Endothelial cell of umbilical vein (primary cell): ENCODE measurements at regions of chr16 and their contacts with region 1.

Region 1: GRCh38 chr16:2500918-2501750 is 12.6 kb upstream of the ATP6V0C start:
- DNase-seq: peak; percentile 84
- H3K4me3 ChIP-seq: peak overlapping the region in 1 of 3 experiments; percentile 20
- H3K27ac ChIP-seq: no peak overlapping the region
- H3K4me1 ChIP-seq: no peaks in the 10 kb centered on the region
- H3K27me3 ChIP-seq: no peaks in the 10 kb centered on the region
- CTCF ChIP-seq: peak; percentile 96 to 99
- POLR2A ChIP-seq: no peak

Region 2: DNA sequence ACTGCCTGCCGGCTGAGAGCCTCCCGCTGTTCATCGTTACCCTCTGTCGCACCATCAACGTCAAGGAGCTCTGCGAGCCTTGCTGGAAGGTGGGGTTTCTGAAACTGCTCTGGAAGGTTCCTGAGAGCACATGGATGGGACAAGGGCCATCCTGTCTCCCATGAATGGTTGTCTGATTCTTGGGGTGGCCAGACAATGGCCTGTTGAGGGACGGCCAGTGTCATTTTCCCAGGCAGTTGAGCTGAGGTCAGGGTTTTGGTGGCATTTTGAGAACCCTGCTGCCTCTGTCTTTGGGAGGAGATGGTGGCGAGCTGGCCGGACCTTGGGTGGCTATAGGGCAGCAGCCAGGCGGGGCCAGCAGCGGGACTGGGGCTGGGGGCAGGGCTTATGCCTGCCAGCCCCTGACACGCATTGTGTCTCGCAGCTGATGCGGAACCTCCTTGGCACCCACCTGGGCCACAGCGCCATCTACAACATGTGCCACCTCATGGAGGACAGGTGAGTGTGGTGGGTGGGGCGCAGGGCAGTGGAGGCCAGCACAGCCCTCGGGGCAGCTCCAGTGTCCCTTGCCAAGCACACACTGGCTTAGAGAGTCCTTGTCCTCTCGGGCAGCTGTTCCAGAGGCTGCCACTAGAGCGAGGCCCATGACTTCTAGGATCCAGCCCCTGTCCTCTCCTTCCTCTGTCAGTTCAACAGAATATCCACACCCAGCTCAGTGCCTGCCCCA is 444.3 kb before region 1 on chr16:
- CTCF ChIA-PET with region 1: no interaction called
- POLR2A ChIA-PET with region 1: no interaction called
- dilution Hi-C with region 1: no loop called
- intact Hi-C with region 1: no loop called
- DNase-seq: no peak
- H3K4me3 ChIP-seq: no peak overlapping the region
- H3K27ac ChIP-seq: no peak overlapping the region
- H3K4me1 ChIP-seq: no peaks in the 10 kb centered on the region
- H3K27me3 ChIP-seq: no peaks in the 10 kb centered on the region
- CTCF ChIP-seq: no peak
- POLR2A ChIP-seq: no peak

Region 3: GRCh38 chr16:2267913-2268666 is 233.0 kb before region 1 on chr16 and contains the start of gene RNPS1:
- CTCF ChIA-PET with region 1: no interaction called
- POLR2A ChIA-PET with region 1: no interaction called
- dilution Hi-C with region 1: no loop called
- intact Hi-C with region 1: loop called (anchors 2 kb)
- DNase-seq: peak; percentile 96
- H3K4me3 ChIP-seq: peak within 1 kb of the TSS; percentile 16 to 73 (median 44)
- H3K27ac ChIP-seq: peak within 1 kb of the TSS; percentile 78
- H3K4me1 ChIP-seq: peaks cover 9% of the 10 kb centered on the region
- H3K27me3 ChIP-seq: no peaks in the 10 kb centered on the region
- CTCF ChIP-seq: no peak
- POLR2A ChIP-seq: peak; percentile 85
- total RNA-seq, gene RNPS1: 204 and 209 TPM in 2 replicates

Region 4: DNA sequence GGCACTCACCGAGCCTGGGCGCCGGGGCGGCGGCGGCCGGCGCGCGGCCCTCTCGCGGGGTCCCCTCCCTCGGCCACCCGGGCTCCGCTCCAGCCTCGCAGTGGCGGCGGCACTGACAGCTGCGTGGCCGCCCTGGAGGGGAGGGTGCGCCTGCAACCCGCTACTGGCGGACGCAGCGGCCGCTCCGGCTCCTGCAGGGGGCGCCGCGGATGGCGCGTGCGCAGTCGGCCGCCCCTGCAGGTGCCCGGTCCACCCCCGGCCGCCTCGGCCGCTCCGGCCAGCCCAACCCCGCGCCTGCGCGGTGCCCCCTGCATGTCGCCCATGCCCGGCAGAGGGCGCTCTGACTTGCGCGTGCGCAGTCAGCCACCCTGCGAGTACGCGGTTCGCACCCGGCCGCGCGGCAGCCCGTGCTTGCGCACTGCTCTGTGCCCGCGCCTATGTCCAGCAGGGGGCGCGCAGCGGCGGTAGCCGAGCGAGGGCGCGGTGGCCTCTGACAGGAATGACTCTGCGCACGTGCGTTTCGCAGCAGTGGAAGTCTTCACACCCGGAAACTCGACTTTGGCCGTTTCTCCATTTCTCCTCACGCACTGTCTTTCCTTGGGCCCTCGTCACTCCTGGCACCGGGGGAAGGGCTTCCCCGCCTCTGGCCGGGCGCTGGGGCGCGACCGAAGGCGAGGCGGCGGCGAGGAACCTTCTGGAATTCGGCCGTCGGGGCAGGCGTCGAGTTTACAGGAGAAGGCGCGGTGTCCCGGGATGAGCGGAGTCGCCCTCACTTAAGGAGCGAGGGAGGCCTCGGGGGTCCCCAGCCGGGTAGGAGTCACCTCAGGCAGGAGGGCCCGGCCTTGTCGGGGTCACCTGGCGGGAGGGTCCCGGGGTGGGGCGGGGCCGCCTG is 160.3 kb before region 1 on chr16 and contains the start of gene ABCA3:
- CTCF ChIA-PET with region 1: interaction called, 12 read pairs
- POLR2A ChIA-PET with region 1: no interaction called
- dilution Hi-C with region 1: no loop called
- intact Hi-C with region 1: loop called (anchors 1 kb)
- DNase-seq: peak; percentile 98
- H3K4me3 ChIP-seq: peak within 1 kb of the TSS; percentile 57 to 79 (median 60)
- H3K27ac ChIP-seq: peak within 1 kb of the TSS; percentile 29
- H3K4me1 ChIP-seq: peaks cover 9% of the 10 kb centered on the region
- H3K27me3 ChIP-seq: peaks cover 7 to 28% of the 10 kb centered on the region in 2 experiments
- CTCF ChIP-seq: peak; percentile 98 to 100
- POLR2A ChIP-seq: peak; percentile 70
- total RNA-seq, gene ABCA3: 25.5 and 36.0 TPM in 2 replicates

Region 5: GRCh38 chr16:2474877-2475412 is 26.2 kb before region 1 on chr16 and contains the start of gene TBC1D24:
- CTCF ChIA-PET with region 1: interaction called, 10 read pairs
- POLR2A ChIA-PET with region 1: no interaction called
- dilution Hi-C with region 1: no loop called
- intact Hi-C with region 1: loop called (anchors 2 kb)
- DNase-seq: peak; percentile 82
- H3K4me3 ChIP-seq: peak within 1 kb of the TSS; percentile 33 to 72 (median 69)
- H3K27ac ChIP-seq: peak within 1 kb of the TSS; percentile 8
- H3K4me1 ChIP-seq: peaks cover 10% of the 10 kb centered on the region
- H3K27me3 ChIP-seq: peaks cover 11 to 19% of the 10 kb centered on the region in 2 experiments
- CTCF ChIP-seq: no peak
- POLR2A ChIP-seq: peak; percentile 92
- total RNA-seq, gene TBC1D24: 17.3 and 22.8 TPM in 2 replicates

Region 6: DNA sequence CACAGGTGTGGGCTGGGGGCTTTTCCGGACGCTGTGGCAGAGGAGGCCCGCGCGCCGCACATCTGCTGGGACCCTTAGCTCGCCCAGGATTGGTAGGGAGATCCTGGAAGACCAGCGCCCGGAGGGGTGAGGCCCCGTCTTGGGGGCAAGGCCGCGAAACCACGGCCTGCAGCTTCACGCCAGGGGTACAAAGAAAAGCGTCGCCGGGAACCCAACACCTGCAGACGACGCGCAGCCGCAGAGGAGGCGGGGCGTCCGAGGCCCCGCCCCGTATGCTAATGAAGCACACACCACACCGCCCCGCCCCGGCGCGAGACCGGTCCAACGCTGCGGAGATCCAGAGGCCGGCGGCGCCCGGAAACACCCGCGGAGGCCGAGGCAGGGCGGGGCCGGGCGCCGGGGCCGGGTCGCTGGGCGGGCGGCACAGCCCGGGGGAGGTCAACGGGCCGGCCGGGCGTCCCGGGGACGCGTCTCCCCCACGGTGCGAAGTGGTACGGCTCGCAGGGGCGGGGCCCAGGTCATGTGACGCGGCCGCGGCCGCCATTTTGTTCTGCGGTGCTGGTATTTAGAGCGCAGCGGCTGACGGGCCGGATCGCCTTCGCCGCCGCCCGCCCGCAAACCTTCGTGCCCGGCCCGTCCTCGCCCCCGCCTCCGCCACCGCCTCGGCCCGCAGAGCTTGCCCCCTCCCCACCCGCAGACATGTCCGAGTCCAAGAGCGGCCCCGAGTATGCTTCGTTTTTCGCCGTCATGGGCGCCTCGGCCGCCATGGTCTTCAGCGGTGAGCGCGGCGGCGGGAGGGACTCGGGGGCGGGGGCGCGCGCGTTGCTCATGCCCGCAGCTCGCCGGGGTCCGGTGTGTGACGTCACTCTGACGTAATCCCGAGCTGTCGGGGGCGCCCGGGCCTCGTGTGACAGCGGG is 12.5 kb after region 1 on chr16 and contains the start of gene ATP6V0C:
- CTCF ChIA-PET with region 1: interaction called, 11 read pairs
- POLR2A ChIA-PET with region 1: no interaction called
- dilution Hi-C with region 1: no loop called
- intact Hi-C with region 1: no loop called
- DNase-seq: peak; percentile 76
- H3K4me3 ChIP-seq: peak within 1 kb of the TSS; percentile 52 to 91 (median 73)
- H3K27ac ChIP-seq: peak within 1 kb of the TSS; percentile 72
- H3K4me1 ChIP-seq: peaks cover 23% of the 10 kb centered on the region
- H3K27me3 ChIP-seq: no peaks in the 10 kb centered on the region
- CTCF ChIP-seq: no peak
- POLR2A ChIP-seq: peak; percentile 96
- total RNA-seq, gene ATP6V0C: 187 and 194 TPM in 2 replicates